Activated CD4-positive, alpha-beta memory T cell treated with anti-CD3 and anti-CD28 coated beads, Interleukin-2, amount 10 ng/mL, durations not matched to agents 7 days and 5 days (primary cell): ENCODE measurements at regions of chr6 and their contacts with region 1.

Region 1: DNA sequence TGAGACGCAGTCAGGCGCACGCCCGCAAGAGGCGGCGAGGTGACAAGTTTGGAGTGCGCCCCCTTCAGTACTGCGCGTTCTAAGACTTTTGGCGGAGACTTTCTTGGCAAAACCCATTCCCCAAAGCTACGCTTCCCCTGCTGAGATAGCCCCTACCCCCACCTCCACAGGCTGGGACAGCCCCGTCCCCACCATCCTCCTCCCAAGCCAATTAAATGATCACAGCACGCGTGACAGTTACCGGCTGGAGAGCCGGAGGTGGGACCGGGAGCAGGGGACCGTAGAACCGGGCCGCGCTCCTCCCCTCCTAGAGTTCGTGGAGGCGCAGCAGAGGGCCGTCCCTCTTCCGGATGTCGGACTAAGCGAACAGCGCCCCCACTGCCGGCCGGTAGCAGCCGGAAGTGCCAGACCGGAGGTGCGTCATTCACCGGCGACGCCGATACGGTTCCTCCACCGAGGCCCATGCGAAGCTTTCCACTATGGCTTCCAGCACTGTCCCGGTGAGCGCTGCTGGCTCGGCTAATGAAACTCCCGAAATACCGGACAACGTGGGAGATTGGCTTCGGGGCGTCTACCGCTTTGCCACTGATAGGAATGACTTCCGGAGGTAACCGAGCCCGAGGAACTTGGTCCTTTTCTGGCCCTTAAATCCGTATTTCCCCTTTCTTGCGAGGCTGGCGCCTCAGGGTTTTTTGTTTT is at the start of gene TOMM6:
- DNase-seq: peak; percentile 96
- H3K4me3 Mint-ChIP-seq: peak within 1 kb of the TSS; percentile 82
- H3K27ac Mint-ChIP-seq: peak within 1 kb of the TSS; percentile 85
- H3K4me1 Mint-ChIP-seq: peaks cover 20% of the 10 kb centered on the region
- H3K27me3 Mint-ChIP-seq: peaks cover 5% of the 10 kb centered on the region
- total RNA-seq, gene TOMM6: 126 to 130 TPM

Region 2: DNA sequence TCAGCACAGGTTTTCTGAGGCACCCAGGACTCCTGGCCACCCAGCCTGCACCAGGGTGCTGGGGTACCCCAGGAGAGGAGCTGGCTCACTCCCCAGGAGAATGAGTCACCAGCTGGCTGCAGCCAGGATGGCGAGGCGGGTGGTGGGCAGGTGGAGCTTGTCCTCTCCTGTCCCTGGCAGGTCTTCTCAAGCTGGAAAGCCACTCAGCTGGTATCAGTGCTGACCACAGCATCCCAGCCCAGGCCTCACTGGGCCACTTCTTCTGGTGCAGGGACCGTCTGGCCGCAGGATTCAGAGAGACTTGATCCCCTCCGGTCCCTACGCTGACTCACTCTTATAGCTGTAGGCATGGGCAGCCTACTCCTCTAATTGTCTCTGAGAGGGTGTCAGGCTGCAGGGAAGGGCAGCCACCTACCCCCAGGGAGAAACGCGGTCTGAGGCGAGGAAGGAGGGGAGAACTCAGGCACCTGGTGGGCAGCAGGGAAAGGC is 74.2 kb before region 1 on chr6:
- CTCF ChIA-PET with region 1: no interaction called
- POLR2A ChIA-PET with region 1: no interaction called
- DNase-seq: no peak
- H3K4me3 Mint-ChIP-seq: no peak overlapping the region
- H3K27ac Mint-ChIP-seq: no peak overlapping the region
- H3K4me1 Mint-ChIP-seq: peaks cover 15% of the 10 kb centered on the region
- H3K27me3 Mint-ChIP-seq: no peaks in the 10 kb centered on the region

Region 3: GRCh38 chr6:41735427-41736356 is 51.7 kb before region 1 on chr6 and contains the start of gene TFEB:
- CTCF ChIA-PET with region 1: interaction called, 12 read pairs
- POLR2A ChIA-PET with region 1: interaction called, 21 read pairs
- DNase-seq: peak; percentile 95
- H3K4me3 Mint-ChIP-seq: peak within 1 kb of the TSS; percentile 79
- H3K27ac Mint-ChIP-seq: peak within 1 kb of the TSS; percentile 64
- H3K4me1 Mint-ChIP-seq: peaks cover 30% of the 10 kb centered on the region
- H3K27me3 Mint-ChIP-seq: peaks cover 2% of the 10 kb centered on the region
- total RNA-seq, gene TFEB: 14.9 to 15.0 TPM

Region 4: DNA sequence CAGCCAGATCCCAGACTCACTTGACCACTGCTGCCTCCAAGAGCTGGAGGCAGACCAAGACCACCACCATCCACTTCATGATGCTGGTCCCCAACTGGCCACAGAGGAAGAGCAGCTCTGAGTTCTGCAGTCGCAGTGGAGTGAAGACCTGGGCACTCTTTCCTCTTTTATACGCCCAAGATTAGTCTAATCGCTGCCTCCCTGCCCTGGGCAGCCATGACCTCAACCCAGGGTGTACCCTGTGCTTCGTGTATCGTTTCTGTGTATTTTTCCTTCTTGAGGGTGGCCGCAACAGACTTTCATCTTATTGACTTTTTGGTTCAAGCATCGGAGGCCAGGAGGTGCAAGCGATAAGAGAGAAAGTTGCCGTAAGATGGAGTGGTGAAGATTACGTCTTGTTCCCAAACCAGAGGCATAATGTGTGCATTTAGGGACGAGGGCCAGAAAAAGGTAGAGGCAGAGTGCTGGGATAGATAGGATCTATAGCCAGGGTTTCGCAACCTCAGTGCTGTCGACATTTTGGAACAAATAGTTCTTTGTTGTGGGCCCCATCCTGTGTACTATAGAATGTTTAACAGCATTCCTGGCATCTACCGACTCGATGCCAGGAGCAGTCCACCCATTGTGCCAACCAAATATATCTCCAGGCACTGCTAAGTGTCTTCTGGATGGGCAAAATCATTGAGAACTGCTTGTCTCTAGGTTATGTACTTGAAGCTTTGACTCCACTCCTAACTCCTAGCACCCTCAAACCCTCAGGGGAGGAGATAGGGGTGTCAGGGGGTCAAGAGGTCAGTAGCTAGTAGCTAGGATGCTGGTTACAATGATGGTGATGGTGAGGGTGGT is 39.9 kb before region 1 on chr6 and contains the start of gene PGC:
- CTCF ChIA-PET with region 1: no interaction called
- POLR2A ChIA-PET with region 1: no interaction called
- DNase-seq: no peak
- H3K4me3 Mint-ChIP-seq: no peak within 1 kb of the TSS
- H3K27ac Mint-ChIP-seq: no peak within 1 kb of the TSS
- H3K4me1 Mint-ChIP-seq: no peaks in the 10 kb centered on the region
- H3K27me3 Mint-ChIP-seq: peaks cover 6% of the 10 kb centered on the region
- total RNA-seq, gene PGC: not detected

Region 5: GRCh38 chr6:41801380-41801779 is 14.0 kb after region 1 on chr6:
- CTCF ChIA-PET with region 1: interaction called, 13 read pairs
- POLR2A ChIA-PET with region 1: no interaction called
- DNase-seq: no peak
- H3K4me3 Mint-ChIP-seq: no peak overlapping the region
- H3K27ac Mint-ChIP-seq: no peak overlapping the region
- H3K4me1 Mint-ChIP-seq: peaks cover 6% of the 10 kb centered on the region
- H3K27me3 Mint-ChIP-seq: no peaks in the 10 kb centered on the region

Region 6: DNA sequence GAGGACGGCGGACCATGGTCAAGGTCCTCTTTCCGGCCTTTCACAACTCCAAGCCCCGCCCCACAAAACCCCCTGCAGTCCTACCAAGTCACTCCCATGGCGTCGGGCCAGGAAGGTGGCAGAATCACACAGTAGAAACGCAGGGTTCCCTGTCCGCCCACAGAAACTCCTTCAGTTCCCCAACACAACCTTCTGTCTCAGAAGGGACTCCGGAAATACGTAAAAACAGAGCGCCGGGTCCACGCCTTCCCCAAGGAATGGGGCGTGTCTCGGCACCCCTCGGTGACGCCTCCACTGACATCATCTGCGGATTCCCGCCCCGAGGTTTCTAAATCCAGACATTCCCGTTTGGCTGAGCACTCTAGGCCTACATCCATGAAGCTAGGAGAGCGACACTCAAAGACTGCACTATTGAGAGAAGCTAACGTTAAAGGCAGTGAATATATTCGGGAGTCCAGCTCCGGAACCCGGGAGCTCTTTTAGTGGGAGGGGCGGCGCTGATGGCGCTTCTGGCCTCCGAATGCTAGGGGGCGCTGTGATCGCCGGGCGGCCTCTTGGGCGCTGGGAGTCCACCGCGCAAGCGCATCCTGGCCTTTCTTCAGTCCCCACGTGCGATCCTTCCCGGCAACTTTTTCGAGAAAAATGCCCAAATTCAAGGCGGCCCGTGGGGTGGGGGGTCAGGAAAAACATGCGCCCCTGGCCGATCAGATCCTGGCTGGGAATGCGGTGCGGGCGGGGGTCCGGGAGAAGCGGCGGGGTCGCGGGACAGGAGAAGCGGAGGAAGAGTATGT is 133.7 kb after region 1 on chr6 and contains the starts of genes BYSL and MED20:
- CTCF ChIA-PET with region 1: interaction called, 66 read pairs
- POLR2A ChIA-PET with region 1: interaction called, 19 read pairs
- DNase-seq: peak; percentile 95
- H3K4me3 Mint-ChIP-seq: peak within 1 kb of the TSS; percentile 95
- H3K27ac Mint-ChIP-seq: peak within 1 kb of the TSS; percentile 97
- H3K4me1 Mint-ChIP-seq: peaks cover 59% of the 10 kb centered on the region
- H3K27me3 Mint-ChIP-seq: no peaks in the 10 kb centered on the region
- total RNA-seq, gene BYSL: 23.9 to 24.8 TPM
- total RNA-seq, gene MED20: 21.4 to 21.9 TPM

Region 7: DNA sequence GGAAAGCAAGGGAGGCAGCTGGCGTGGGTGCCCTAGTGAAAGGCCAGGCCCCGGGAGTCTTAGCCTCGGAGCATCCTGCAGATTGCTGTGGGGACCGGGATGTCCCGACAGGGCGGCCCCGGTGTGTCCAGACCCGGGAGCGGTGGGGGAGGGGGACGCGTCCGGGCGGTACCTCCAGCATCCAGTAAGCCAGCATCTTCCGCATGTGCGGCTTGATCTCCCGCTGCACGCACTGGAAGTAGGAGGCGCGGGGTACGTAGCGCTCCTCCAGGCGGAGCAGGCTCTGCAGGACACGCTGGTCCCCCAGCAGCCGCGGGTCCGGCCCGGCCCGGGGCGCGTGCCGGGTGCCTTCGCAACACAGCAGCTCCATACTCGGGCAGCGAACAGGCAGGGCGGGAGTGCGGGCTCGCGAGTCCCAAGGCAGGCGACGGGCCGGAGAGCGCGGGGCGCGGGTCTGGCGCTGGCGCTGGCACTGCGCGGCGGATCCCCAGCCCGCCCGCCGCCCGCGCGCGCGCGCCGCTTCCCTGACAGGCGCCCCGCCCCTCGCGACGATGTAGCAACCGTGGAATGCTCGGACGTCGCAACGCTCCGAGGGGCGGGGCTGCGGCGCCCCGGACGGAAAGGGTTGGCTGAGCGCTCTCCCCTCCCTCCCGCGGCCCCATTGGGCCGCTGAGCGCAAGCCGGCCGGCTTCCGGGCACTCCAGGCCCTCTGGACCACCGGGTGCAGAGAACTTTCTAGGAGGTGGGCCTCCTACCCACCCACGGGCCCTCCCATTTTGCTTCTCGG is 154.1 kb after region 1 on chr6 and contains the start of gene CCND3:
- CTCF ChIA-PET with region 1: interaction called, 24 read pairs
- POLR2A ChIA-PET with region 1: interaction called, 21 read pairs
- DNase-seq: peak; percentile 92
- H3K4me3 Mint-ChIP-seq: peak within 1 kb of the TSS; percentile 100
- H3K27ac Mint-ChIP-seq: peak within 1 kb of the TSS; percentile 93
- H3K4me1 Mint-ChIP-seq: peaks cover 38% of the 10 kb centered on the region
- H3K27me3 Mint-ChIP-seq: no peaks in the 10 kb centered on the region
- total RNA-seq, gene CCND3: 456 to 464 TPM

Region 8: DNA sequence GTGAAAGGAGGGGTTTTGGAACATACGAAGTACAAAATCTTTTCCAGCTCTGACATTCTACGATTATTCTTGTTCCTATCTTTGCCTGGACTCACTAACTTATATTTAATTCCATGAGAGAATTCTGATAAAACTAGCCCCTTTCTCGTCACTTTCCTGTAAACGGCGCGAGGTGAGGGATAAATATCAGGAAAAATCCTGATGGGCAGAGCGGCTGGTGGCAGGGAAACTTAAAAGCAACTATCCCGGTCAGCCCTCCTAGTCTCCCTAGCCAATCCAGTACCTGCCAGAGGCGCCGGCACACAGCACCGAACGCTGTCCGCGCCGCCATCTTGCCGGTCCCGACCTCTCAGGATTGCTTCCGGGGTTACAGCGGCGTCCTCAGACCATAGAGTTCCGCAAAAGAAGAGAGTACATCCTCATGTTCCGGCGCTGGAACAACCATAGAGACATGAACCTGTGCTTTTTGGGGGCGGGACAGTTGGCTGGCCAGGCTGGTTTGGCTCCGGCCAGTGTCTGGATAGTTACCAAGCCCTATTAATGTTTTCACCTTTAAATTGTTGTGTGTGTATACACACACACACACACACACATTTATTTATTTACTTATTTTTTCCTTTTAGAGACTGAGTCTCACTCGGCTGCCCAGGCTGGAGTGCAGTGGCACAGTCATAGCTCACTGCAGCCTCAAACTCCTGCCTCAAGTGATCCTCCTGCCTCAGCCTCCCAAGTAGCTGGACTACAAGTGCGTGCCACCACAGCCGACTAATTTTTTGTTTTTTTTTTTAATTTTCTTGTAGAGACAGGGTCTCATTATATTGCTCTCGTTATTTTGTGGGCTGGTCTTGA is 430.4 kb after region 1 on chr6 and contains the start of gene MRPS10:
- CTCF ChIA-PET with region 1: interaction called, 13 read pairs
- POLR2A ChIA-PET with region 1: no interaction called
- DNase-seq: peak; percentile 93
- H3K4me3 Mint-ChIP-seq: peak within 1 kb of the TSS; percentile 97
- H3K27ac Mint-ChIP-seq: peak within 1 kb of the TSS; percentile 80
- H3K4me1 Mint-ChIP-seq: peaks cover 33% of the 10 kb centered on the region
- H3K27me3 Mint-ChIP-seq: no peaks in the 10 kb centered on the region
- total RNA-seq, gene MRPS10: 28.4 to 32.8 TPM